ENCODE measurements at regions of chr17 and their contacts with region 1.

Region 1: DNA sequence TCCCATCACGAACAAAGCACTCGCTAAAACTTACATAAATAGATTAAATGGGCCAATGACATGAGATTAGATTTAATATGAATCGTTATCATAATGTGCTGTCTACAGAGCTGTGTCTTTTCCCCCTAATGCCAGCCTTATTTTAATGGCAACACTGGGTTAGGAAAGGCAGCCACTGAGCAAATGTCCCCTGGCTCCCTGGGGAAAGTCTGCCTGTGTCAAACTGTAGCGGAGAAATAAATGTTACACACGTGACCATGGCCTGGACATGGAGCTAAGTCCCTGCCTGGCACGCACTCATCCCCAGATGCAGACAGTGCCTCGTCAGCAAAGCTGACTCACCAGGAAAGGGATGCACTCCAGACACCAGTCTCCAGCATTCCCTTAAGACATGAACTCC is 61.3 kb upstream of the SDK2 start:
- DNase-seq: no peak
- H3K4me3 ChIP-seq: no peak overlapping the region
- H3K27ac ChIP-seq: no peak overlapping the region
- H3K4me1 ChIP-seq: peaks cover 0 to 6% (median 0%) of the 10 kb centered on the region in 3 donors
- H3K27me3 ChIP-seq: peaks cover 0 to 75% (median 0%) of the 10 kb centered on the region in 4 donors
- CTCF ChIP-seq: no peak
- POLR2A ChIP-seq: no peak

Region 2: DNA sequence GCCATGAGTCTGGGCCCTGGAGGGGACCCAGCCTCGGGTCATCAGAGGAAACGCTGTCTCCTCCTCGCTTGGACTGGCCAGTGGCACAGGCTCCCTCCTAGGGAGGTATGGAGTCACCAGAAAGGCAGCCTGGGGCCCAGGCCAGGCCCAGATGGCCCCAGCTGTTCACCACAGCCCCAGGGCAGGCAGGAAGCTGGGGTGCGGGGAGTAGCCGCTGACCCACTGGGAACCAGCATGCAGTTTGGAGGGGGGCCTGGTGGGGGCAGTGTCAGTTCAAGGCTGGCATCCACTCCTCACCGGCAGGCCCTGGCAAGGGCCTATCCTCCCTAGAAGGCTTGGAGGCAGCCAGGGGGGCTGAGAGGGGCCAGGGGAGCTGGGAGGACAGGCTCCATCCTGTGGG is 110.1 kb before region 1 on chr17:
- intact Hi-C with region 1: loop called (anchors 10 kb)
- DNase-seq: no peak
- H3K4me3 ChIP-seq: no peak overlapping the region
- H3K27ac ChIP-seq: no peak overlapping the region
- H3K4me1 ChIP-seq: peaks cover 0 to 27% (median 0%) of the 10 kb centered on the region in 3 donors
- H3K27me3 ChIP-seq: peaks cover 0 to 11% (median 0%) of the 10 kb centered on the region in 4 donors
- CTCF ChIP-seq: peak; percentile 22 to 50 (median 31)
- POLR2A ChIP-seq: no peak

Measured in esophagus squamous epithelium (tissue), 5 donors.